Heart right ventricle (tissue), 16 donors: ENCODE measurements at regions of chr13 and their contacts with region 1.

Region 1: GRCh38 chr13:93640452-93640851 is 413.8 kb downstream of the GPC6 start:
- DNase-seq: no peak
- ATAC-seq: no peak
- H3K4me3 ChIP-seq: no peak overlapping the region
- H3K27ac ChIP-seq: no peak overlapping the region
- H3K4me1 ChIP-seq: no peaks in the 10 kb centered on the region
- H3K27me3 ChIP-seq: no peaks in the 10 kb centered on the region
- CTCF ChIP-seq: no peak

Region 2: GRCh38 chr13:93655154-93655553 is 14.7 kb after region 1 on chr13:
- intact Hi-C with region 1: loop called in 1 of 10 experiments (anchors 1 kb)
- DNase-seq: no peak
- ATAC-seq: peak in 1 of 8 donors; percentile 35
- H3K4me3 ChIP-seq: no peak overlapping the region
- H3K27ac ChIP-seq: no peak overlapping the region
- H3K4me1 ChIP-seq: no peaks in the 10 kb centered on the region
- H3K27me3 ChIP-seq: no peaks in the 10 kb centered on the region
- CTCF ChIP-seq: no peak

Region 3: DNA sequence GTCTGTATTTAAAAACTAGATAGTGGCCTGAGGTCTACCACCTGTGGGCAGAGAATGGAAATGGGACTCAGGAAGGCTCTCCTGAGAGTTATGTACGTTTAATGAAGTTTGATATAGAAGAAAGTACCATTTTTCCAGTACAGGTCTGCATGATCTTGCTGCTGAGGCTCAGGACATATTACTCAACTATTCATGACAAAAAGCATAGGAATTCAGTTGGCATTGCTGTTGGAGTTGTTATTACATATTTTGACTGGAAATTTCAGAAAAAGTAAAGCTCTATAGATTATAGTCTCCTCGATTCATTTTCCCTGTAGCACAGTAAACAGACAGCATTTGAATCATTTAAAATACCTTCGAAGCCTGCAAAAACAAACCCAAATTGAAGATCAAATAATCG is 369.2 kb after region 1 on chr13:
- intact Hi-C with region 1: no loop called
- DNase-seq: no peak
- ATAC-seq: no peak
- H3K4me3 ChIP-seq: no peak overlapping the region
- H3K27ac ChIP-seq: no peak overlapping the region
- H3K4me1 ChIP-seq: peaks cover 0 to 8% (median 0%) of the 10 kb centered on the region in 9 donors
- H3K27me3 ChIP-seq: no peaks in the 10 kb centered on the region
- CTCF ChIP-seq: no peak

Region 4: GRCh38 chr13:94053986-94054593 is 413.6 kb after region 1 on chr13:
- intact Hi-C with region 1: no loop called
- DNase-seq: no peak
- ATAC-seq: no peak
- H3K4me3 ChIP-seq: no peak overlapping the region
- H3K27ac ChIP-seq: no peak overlapping the region
- H3K4me1 ChIP-seq: no peaks in the 10 kb centered on the region
- H3K27me3 ChIP-seq: no peaks in the 10 kb centered on the region
- CTCF ChIP-seq: no peak